Astrocyte of the cerebellum (primary cell): ENCODE measurements at regions of chr9 and their contacts with region 1.

Region 1: GRCh38 chr9:21802195-21803000 is at the start of gene MTAP:
- DNase-seq: peak; percentile 87
- H3K4me3 ChIP-seq: peak within 1 kb of the TSS; percentile 66
- CTCF ChIP-seq: no peak

Region 2: DNA sequence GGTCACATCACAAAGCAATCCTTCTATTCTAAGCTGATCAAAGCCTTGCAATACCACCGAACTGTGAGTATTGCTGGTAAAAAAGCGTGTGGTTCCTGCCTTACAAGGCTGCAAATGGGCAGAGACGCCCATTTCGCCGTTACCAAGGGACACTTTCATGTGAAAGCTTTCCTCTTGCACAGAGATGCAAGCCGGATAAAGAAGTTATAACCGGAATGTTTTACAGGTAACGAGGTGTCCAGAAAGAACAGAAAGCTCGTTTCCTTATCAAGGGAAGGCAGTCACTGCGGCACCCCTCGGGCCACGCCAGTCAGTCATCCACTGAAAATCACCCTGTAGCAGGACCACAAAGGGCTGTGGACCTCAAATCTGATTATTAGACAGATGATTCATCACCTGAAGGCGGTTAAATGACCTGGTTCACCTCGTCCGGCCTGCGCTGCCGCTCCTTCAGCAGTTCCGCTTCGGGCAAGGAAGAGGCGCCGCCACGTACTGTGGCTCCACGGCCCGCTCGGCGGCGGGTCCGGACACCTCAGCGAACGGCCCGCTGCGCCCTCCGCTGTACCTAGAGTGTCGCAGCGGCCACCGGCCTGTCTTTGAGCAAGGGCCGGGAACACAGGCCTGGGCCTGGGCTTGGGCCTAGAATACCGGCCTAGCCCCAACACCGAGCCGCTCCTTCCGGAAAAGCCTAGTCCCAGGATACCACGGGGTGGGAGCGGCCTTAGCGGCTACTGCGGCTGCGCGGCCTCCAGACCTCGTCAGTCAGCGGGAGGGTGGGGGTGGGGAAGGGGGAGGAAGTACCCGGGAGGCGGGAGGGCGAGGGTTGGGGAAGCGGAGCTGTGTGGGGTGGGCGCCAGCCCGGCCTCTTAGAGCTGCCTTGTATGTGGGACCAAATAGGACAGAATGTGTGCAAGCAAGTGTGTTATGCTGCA is 467.4 kb before region 1 on chr9 and contains the start of gene KLHL9:
- in situ Hi-C with region 1: loop called (anchors 25 kb)
- DNase-seq: peak; percentile 76
- H3K4me3 ChIP-seq: peak within 1 kb of the TSS; percentile 67
- CTCF ChIP-seq: no peak

Region 3: DNA sequence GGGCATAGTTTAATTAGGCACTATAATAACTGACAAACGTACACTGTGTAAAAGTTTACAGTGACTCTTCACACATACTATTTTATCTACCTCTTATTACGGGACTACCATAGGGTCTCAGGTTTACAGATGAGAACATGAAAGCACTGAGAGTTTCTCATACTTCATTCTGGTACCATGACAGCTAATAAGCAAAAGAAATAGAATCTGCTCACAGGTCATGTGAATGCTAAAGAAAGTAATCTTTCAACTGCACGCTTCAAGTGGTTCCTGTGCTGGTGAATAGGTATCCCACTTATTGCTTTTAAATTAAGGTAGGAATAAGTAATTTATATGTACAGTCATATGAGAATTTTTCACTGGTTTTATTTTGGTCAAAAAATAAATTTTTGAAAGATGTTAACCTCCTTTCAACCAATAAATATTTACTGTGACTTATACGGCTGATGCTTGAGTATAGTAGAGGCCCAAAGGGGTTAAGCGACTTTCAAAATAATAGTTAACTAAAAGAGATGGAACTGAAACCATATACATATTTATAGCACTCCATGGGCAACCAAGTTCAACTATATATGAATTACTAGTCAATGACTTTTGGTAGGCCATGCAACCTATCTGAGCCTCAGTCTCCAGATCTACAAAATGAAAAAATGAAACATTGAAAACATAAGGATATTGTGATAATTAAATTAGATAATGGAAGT is 183.7 kb after region 1 on chr9:
- in situ Hi-C with region 1: no loop called
- DNase-seq: no peak
- H3K4me3 ChIP-seq: no peak overlapping the region
- CTCF ChIP-seq: no peak

Region 4: DNA sequence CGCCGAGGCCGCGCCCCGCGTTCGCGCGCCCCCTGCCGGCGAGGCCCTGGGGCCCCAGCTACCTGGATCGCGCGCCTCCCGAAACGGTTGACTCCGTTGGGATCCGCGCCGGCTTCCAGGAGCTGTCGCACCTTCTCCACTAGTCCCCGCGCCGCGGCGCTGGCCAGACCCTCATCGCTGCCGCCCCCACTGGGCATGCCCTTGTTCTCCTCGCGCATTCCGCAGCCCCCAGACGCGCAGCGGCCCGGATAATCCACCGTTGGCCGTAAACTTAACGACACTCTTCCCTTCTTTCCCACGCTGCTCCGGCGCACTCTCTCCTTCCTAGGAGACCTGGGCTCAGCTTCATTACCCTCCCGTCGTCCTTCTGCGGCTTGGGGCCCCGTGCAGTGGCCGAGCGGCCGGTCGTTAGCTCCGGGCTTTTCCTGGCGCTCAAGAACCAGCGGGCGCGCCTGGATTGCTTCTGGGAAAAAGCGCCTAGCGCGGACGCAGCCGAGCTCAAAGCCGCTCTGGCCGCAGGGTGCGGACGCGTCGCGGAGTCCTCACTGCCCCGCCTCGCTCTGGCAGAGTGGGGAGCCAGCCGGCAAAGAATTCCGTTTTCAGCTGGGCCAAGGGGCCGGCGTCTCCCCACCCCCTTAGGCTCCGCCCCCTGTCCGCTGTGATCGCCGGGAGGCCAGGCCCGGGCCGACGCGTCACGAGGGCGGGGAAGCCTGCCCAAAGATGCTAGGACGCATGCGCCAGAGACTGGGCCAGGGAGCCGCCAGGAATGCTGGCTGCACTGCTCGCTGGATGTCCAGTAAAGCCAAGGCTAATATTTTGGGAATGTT is 206.6 kb after region 1 on chr9 and contains the start of gene CDKN2B:
- in situ Hi-C with region 1: loop called (anchors 25 kb)
- DNase-seq: peak; percentile 91
- H3K4me3 ChIP-seq: peak within 1 kb of the TSS; percentile 88
- CTCF ChIP-seq: peak; percentile 95

Region 5: DNA sequence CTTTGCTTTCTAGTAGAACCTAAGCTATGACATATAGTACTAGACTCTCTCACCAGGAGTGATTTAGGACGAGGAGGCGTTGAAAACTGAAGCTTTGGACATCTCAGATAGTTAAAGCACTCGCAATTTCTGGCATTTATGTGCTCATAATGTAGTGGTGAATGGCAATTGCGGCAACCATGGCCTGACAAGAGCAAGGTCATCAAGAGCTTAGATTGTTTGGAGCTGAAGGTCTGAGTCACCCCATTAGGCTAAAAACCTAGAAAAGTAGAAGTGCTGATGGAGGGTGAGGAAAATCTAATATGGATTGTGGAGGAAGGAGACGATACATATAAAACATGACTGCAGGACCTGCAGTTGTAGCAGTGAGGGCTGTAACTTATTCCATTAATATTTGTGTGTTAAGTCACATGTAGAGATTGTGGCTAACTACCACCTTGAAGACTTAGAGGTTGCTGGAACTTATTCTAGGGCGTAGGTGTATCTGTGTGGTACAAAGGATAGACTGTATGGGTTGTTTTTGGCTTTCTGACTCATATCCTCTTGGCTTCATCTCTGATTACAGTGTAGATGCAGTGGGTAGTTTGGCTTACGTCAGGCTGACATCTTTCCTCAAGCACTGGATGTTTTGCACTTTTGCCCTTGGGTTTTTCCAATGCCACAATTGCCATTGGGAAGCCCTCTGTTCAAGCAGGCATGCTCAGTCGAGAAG is 345.6 kb after region 1 on chr9:
- in situ Hi-C with region 1: loop called (anchors 25 kb)
- DNase-seq: peak; percentile 71
- H3K4me3 ChIP-seq: no peak overlapping the region
- CTCF ChIP-seq: no peak